ENCODE measurements at regions of chr3 and their contacts with region 1.

Region 1: DNA sequence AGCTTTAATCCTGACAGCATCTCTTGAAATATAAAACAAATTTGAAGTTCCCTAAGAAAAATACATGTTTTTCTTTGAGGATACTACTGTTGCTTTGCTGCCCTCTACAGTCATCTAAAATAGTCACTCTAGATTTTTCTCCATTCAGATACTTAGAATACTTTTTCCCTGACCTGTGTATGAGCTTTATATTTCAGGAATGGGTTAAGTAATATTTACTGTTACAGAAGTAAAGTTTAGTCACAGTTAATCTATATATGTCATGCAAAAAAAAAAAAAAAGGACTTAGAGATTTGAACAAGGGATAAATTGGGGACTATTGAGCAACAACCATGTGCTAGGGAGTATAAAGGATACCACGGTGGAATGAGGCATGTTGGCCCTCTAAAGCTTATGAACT is 8.8 kb downstream of the NECTIN3 start:
- DNase-seq: no peak

Region 2: GRCh38 chr3:110859336-110859735 is 221.1 kb before region 1 on chr3:
- intact Hi-C with region 1: loop called (anchors 5 kb)
- DNase-seq: no peak

Region 3: GRCh38 chr3:111414531-111414930 is 334.1 kb after region 1 on chr3:
- intact Hi-C with region 1: no loop called
- DNase-seq: no peak

Measured in posterior cingulate gyrus (tissue), 11 donors.